ENCODE measurements at regions of chr4 and their contacts with region 1.

Region 1: DNA sequence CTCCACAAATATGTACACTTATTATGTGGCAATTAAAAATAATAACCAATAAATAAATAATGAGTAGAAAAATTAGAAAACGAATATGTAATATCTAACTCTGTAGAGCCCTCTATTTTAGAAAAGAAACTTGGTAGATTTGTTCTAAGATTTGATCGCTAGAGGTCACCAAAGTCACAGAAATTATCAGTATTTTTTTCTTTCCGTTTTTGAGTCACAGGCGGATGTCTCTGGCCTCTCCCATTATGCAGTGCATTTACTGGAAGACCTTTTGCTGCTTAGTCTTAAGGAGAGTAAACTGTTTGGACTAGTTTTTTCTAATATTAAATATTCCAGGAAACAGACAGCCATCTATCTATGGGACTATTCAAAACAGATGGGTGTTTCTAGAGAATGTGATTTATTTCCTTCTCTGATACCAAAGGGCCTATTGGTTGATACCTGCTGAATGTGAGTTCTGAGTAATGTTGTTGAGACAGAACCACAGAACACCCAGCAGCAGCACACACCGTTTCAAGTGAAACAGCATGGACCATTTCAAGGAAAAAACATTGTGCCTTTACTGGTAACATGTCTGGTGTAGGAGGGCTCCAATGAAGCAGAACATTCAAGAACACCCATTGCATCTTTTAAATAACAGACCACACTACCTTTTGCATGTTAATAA is 34.0 kb upstream of the GYPA start:
- DNase-seq: peak in 11 of 42 donors; percentile 3 to 53 (median 20)

Region 2: DNA sequence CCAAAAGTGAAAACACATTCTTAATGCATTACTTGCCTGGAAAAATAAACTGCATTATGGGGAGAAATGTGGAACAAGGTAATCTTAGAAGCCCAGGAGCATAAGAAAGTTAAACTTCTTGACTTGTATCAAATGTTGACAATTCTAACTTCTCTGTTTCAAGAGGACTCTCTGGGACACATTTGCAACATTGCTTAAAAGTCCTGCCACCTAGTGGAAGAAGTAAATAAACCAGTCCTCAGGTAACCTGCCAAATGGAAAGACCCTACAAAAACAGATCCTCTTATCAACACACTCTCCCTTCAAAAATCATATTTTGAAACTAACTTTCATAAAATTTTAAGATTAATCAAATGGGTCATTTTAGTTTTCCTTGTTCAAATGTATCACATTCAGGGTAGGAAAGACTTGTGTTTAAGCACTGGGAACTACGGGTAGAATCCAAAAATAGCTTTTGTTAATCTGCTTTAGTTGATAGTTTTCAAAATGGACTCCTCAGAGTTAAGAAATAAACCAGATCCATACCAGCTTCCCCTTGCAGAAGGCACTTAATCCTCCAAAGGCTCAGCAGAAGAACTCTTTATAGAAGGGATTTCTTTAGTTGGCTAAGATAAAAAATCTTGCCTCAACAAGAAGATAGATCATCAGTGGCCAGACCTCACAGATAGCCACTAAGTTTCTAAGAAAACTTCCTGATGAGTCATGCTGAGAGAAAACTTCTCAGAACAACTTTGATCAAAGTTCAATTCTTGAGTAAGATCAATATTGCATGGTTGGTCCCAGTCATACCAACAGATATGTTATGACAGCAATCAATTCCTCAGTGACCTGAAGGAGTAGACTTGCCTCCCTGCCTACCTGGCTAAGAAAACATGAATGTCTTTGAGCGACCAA is 613.1 kb after region 1 on chr4:
- intact Hi-C with region 1: loop called (anchors 10 kb)
- DNase-seq: peak in 5 of 42 donors; percentile 1 to 33 (median 9)

Region 3: DNA sequence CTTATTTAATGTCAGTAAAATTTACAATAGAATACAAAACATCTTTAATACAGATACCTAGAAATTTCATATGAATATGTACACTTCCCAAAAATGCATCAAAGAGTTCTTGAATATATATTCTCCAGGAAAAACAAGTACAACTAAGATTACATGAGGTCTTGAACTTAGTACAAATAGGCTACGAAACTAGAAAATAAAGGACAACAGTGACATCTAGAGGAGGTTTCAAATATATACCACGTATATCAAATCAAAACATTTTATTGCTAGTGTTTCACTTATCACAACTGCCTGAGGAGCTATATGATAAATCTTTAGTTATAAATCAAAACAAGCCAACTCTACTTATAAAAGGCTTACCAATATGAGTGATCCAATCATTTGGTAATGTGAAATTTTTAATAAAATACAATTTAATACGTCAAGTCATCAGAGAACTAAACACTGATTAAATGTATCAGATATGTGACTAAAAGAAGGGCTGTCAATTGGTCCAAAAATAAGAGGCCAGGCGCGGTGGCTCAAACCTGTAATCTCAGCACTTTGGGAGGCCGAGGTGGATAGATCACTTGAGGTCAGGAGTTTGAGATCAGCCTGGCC is 886.9 kb after region 1 on chr4:
- intact Hi-C with region 1: loop called (anchors 10 kb)
- DNase-seq: no peak